Right lobe of liver (tissue), 6 donors: ENCODE measurements at regions of chr17 and their contacts with region 1.

Region 1: GRCh38 chr17:27760069-27760885 is 40.1 kb downstream of the NOS2 start:
- DNase-seq: peak; percentile 67 to 74 (median 67)
- ATAC-seq: peak; percentile 50 to 78 (median 72)
- H3K4me3 ChIP-seq: no peak overlapping the region
- H3K27ac ChIP-seq: no peak overlapping the region
- H3K4me1 ChIP-seq: no peaks in the 10 kb centered on the region
- H3K27me3 ChIP-seq: no peaks in the 10 kb centered on the region
- CTCF ChIP-seq: peak; percentile 82 to 95 (median 90)
- POLR2A ChIP-seq: no peak

Region 2: GRCh38 chr17:27654654-27655524 is 105.4 kb before region 1 on chr17:
- intact Hi-C with region 1: loop called (anchors 5 to 10 kb)
- DNase-seq: peak; percentile 70 to 78 (median 77)
- ATAC-seq: peak; percentile 64 to 86 (median 80)
- H3K4me3 ChIP-seq: no peak overlapping the region
- H3K27ac ChIP-seq: no peak overlapping the region
- H3K4me1 ChIP-seq: no peaks in the 10 kb centered on the region
- H3K27me3 ChIP-seq: no peaks in the 10 kb centered on the region
- CTCF ChIP-seq: peak; percentile 90 to 98 (median 94)
- POLR2A ChIP-seq: no peak

Region 3: DNA sequence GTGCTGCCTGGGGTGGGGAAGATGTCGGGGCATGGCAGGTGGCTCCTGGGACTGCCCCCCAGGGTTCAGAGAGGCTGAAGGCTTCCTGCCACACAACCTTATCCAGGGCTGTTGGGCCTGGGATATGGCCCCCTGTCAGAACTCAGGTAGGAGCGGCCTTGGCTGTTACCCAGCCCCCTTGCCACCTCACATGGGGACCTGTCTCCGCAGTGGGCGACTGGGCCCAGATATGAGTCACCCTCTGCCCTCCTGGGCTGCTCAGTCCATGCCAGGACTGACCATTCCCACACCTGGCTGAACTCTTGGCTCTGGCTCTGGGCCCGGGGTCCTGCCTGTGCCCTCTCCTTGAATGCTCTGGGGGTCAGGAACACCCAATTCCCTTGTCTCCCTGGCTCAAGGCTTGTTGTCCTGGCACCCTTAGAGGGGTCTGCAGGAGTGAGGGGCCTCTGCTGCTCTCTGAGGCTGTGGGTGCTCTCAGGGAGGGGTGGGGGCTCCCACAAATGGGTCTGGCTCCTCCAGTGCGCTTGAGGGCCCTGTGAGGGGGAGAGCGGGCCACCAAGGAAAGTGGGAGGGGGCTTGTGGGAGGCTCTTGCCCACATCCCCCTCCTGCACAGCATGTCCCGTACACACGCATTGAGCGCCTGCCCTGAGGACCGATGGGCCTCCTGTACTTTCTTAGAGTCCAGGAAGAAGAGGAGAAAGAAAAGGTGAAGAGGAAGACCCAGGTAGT is 93.3 kb before region 1 on chr17:
- intact Hi-C with region 1: loop called in 1 of 2 experiments (anchors 10 kb)
- DNase-seq: peak in 1 of 3 donors; percentile 39
- ATAC-seq: no peak
- H3K4me3 ChIP-seq: no peak overlapping the region
- H3K27ac ChIP-seq: no peak overlapping the region
- H3K4me1 ChIP-seq: no peaks in the 10 kb centered on the region
- H3K27me3 ChIP-seq: no peaks in the 10 kb centered on the region
- CTCF ChIP-seq: no peak
- POLR2A ChIP-seq: no peak

Region 4: DNA sequence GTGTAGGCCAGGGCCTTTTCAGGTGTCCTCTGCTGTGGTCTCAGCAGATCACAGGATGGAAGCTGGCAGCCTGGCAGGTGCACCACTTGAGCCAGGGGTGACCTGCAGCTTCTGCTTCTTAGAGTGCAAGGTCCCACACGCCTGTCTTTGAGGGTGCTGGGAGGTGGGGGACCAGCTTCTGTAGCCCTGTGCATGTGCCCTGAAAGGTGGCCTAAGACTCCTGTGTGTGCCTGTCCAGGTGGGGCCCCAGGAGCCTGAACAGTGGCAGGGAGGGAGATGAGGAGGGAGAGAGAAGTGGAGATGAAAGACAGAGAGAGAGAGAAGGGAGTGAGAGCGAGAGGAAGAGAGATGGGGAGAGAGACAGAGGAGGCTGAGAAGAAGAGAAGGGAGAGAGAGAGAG is 83.1 kb before region 1 on chr17:
- intact Hi-C with region 1: no loop called
- DNase-seq: peak in 1 of 3 donors; percentile 34
- ATAC-seq: no peak
- H3K4me3 ChIP-seq: no peak overlapping the region
- H3K27ac ChIP-seq: no peak overlapping the region
- H3K4me1 ChIP-seq: no peaks in the 10 kb centered on the region
- H3K27me3 ChIP-seq: no peaks in the 10 kb centered on the region
- CTCF ChIP-seq: no peak
- POLR2A ChIP-seq: no peak